ENCODE measurements at regions of chr19 and their contacts with region 1.

Region 1: GRCh38 chr19:56053596-56053995 is 67.0 kb downstream of the NLRP5 start:
- DNase-seq: no peak
- ATAC-seq: no peak
- H3K4me3 ChIP-seq: no peak overlapping the region
- H3K27ac ChIP-seq: no peak overlapping the region
- H3K4me1 ChIP-seq: no peaks in the 10 kb centered on the region
- H3K27me3 ChIP-seq: peaks cover 11% of the 10 kb centered on the region
- CTCF ChIP-seq: no peak

Region 2: DNA sequence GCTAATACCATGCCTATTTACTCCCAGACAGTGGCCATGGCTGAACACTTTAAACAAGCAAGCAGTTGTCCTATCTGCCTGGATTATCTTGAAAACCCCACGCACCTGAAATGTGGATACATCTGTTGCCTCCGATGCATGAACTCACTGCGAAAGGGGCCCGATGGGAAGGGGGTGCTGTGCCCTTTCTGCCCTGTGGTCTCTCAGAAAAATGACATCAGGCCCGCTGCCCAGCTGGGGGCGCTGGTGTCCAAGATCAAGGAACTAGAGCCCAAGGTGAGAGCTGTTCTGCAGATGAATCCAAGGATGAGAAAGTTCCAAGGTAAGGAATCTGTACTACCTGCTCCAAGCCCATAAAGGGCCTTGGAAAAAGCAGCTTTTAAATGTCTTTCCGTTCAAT is 276.1 kb before region 1 on chr19:
- CTCF ChIA-PET with region 1: interaction called, 10 read pairs
- POLR2A ChIA-PET with region 1: no interaction called
- in situ Hi-C with region 1: no loop called
- intact Hi-C with region 1: no loop called
- DNase-seq: peak; percentile 2
- ATAC-seq: no peak
- H3K4me3 ChIP-seq: no peak overlapping the region
- H3K27ac ChIP-seq: no peak overlapping the region
- H3K4me1 ChIP-seq: 0 out of 2 replicates have a peak, but pooled peaks cover 3% of the 10 kb centered on the region
- H3K27me3 ChIP-seq: peaks cover 6% of the 10 kb centered on the region; the same call in 1 of the 2 replicates
- CTCF ChIP-seq: peak; percentile 76

Region 3: GRCh38 chr19:55930996-55931515 is 122.5 kb before region 1 on chr19:
- CTCF ChIA-PET with region 1: no interaction called
- POLR2A ChIA-PET with region 1: no interaction called
- in situ Hi-C with region 1: no loop called
- intact Hi-C with region 1: no loop called
- DNase-seq: no peak
- ATAC-seq: no peak
- H3K4me3 ChIP-seq: no peak overlapping the region
- H3K27ac ChIP-seq: no peak overlapping the region
- H3K4me1 ChIP-seq: no peaks in the 10 kb centered on the region
- H3K27me3 ChIP-seq: peaks cover 12% of the 10 kb centered on the region
- CTCF ChIP-seq: no peak

Region 4: DNA sequence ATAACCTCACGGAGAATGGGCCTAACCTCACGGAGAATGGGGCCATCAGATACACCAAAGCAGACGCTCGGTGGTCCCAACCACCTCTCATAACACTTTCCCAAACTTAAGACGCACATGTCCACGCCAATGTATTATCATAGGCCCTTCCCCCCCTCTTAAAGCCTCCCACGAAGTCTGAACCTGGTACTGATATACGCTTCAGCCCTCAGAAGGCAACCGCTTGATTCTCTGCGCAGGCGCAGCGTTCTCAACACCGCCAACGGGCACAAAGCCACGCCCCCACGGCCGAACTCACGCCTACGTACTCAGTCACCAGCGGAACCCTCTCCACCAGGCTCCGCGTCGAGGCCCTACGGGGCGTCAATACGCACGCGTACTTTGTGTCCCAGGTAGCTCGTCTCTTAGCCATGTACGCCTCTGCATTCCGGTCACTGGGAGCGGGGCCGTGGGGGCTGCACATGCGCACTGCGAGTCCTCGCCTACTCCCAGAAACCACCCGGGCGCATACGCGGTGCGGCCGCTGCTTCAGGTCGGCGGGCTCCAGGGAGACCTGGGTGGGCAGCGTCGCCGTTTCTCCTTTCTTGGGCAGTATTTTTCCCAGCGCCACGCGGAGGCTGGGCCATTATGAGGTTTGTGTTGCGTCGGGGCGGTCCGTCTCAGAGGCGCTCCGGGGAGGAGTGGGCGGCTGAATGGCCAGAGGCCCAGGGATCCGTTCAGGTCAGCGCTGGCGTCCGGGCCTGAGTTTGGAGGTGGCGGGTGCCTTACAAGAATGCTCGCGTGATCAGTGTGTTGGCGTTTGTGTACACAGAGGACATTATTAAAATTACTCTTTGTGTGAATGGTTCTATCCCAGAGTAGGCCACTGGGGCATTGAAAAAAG is 314.5 kb after region 1 on chr19:
- CTCF ChIA-PET with region 1: no interaction called
- POLR2A ChIA-PET with region 1: interaction called, 10 read pairs
- in situ Hi-C with region 1: no loop called
- intact Hi-C with region 1: no loop called
- DNase-seq: no peak
- ATAC-seq: no peak
- H3K4me3 ChIP-seq: peak overlapping the region in 1 of 2 experiments; percentile 27; a peak in 1 of 4 replicates
- H3K27ac ChIP-seq: no peak overlapping the region
- H3K4me1 ChIP-seq: no peaks in the 10 kb centered on the region
- H3K27me3 ChIP-seq: no peaks in the 10 kb centered on the region
- CTCF ChIP-seq: no peak